Activated T-helper 1 cell treated with anti-CD3 and anti-CD28 coated beads, Interleukin-12 subunit alpha, Interleukin-12 subunit beta, Interleukin-2, Interleukin-4 antibody, amounts not matched to agents 30 ng/mL and 10 ng/mL and 1 ng/mL, durations not matched to agents 14 hours and 24 hours and 36 hours (primary cell): ENCODE measurements at regions of chr2 and their contacts with region 1.

Region 1: DNA sequence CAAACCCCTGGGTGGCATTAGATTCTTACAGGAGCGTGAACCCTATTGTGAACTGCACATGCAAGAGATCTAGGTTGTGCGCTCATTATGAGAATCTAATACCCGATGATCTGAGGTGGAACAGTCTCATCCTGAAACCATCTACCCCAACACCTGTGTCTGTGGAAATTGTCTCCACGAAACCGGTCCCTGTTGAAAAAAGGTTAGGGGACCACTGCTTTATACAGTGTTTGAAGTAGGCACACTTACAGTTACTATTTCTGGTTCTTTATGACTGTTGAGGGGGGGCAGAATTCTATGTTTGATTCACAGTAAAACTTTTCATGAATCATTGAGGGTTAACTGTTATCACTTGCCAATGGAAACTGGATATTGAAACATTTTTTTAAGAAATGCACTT is 72.0 kb downstream of the RIF1 start:
- DNase-seq: no peak
- H3K4me3 Mint-ChIP-seq: no peak overlapping the region
- H3K27ac Mint-ChIP-seq: peak overlapping the region; percentile 65
- H3K4me1 Mint-ChIP-seq: peaks cover 35% of the 10 kb centered on the region
- H3K27me3 Mint-ChIP-seq: no peaks in the 10 kb centered on the region

Region 2: GRCh38 chr2:151638191-151638933 is 156.6 kb after region 1 on chr2:
- intact Hi-C with region 1: loop called (anchors 10 kb)
- DNase-seq: no peak
- H3K4me3 Mint-ChIP-seq: peak overlapping the region; percentile 2
- H3K27ac Mint-ChIP-seq: peak overlapping the region; percentile 12
- H3K4me1 Mint-ChIP-seq: peaks cover 27% of the 10 kb centered on the region
- H3K27me3 Mint-ChIP-seq: no peaks in the 10 kb centered on the region